AG04449 (cell line): ENCODE measurements at regions of chr9 and their contacts with region 1.

Region 1: GRCh38 chr9:70340572-70340971 is 73.9 kb downstream of the KLF9 start:
- DNase-seq: no peak
- H3K4me3 ChIP-seq: no peak overlapping the region
- CTCF ChIP-seq: peak; percentile 8

Region 2: GRCh38 chr9:70031141-70031545 is 309.4 kb before region 1 on chr9:
- CTCF ChIA-PET with region 1: no interaction called
- POLR2A ChIA-PET with region 1: no interaction called
- DNase-seq: no peak
- H3K4me3 ChIP-seq: no peak overlapping the region
- CTCF ChIP-seq: no peak

Region 3: DNA sequence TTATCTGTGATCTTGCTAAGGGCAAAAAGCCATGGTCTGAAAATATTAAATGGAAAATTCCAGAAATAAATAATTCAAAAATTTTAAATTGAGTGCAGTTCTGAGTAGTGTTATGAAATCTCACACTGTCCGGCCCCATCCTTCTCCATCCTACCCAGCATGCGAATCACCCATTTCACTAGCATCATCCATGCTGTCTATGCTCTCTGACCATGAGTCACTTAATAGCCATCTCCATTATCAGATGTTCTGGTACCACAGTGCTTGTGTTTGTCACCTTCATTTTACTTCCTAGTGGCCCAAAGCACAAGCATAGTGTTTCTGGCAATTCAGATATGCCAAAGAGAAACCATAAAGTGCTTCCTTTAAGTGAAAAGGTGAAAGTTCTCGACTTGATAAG is 145.1 kb before region 1 on chr9:
- CTCF ChIA-PET with region 1: no interaction called
- POLR2A ChIA-PET with region 1: no interaction called
- DNase-seq: no peak
- H3K4me3 ChIP-seq: no peak overlapping the region
- CTCF ChIP-seq: no peak

Region 4: DNA sequence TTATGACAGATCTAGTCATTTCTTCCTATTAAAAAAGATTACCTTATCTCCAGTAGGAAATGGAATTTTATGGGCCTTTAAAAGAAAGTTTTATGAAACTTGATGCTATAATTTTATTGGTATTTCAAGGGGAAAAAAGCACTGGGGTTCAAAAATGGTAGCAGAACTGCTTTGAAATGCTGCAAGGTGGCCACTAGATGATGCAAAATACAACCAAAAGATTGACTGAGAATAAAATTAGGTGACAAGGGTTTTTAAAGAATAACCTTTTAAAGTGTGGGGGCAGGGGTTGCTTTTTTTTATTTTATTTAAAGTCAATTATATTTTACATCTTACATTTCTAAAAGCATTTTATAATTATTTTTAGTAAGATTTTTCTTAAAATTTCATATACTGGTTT is 12.2 kb after region 1 on chr9:
- CTCF ChIA-PET with region 1: interaction called, 10 read pairs
- POLR2A ChIA-PET with region 1: no interaction called
- DNase-seq: no peak
- H3K4me3 ChIP-seq: no peak overlapping the region
- CTCF ChIP-seq: no peak

Region 5: DNA sequence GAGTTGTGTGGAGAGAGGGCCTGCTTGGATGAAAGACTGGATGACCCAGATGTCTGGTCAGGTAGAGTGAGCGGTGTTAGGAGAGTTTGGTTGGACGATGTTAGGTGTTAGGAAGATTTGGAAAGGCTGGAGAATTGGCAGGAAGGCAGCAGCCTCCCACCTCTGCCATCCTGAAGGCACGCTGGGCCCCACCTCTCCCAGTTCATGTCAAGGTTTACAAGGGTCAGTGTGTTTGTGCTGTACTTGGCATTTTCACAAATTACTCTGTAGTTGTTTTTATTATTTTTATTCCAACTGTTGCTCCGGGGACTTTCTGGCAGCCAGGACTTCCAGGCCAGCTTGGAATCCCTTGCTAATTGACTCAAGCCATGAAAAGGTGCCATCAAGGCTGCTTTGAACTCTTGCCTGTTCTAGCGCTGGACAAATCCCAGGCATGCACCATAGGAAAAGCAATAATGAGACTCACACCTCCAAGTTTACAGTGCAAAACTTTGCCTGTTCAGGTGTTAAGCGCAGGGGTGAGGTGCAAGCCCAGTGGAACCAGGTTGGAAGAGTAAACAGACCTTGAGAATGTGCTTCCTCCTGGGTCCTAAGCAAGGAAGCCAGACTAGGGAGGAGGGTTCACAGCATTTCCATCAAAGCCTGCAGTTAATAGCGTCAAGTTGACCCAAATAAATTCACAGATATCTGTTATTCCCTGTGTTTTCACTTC is 115.6 kb after region 1 on chr9:
- CTCF ChIA-PET with region 1: no interaction called
- POLR2A ChIA-PET with region 1: no interaction called
- DNase-seq: no peak
- H3K4me3 ChIP-seq: no peak overlapping the region
- CTCF ChIP-seq: no peak

Region 6: DNA sequence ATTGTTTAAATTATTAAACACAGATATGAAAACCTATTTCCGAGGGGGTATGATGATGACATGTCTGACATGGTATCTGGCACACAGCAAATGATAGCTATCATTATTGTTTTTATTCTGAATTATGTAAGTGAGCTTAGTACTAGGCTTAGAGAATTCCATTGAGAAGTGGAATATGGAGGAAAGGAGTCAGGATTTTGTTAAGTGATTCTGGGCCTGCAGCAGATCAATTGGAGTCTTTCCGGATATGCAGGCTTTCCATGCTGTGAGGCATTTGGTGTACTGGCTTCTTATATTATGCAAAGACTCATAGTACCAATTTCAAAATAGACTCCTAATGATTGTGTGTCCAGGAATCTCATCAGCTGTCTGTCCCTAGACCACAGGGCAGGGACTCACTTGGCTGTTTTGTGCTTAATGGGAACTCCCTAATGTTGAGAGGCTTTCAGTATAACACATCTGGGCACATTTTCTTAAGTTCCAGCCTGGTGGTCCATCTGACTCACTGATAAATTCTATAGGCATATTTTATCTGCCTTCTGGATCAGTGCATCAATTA is 253.9 kb after region 1 on chr9:
- CTCF ChIA-PET with region 1: interaction called, 175 read pairs
- POLR2A ChIA-PET with region 1: no interaction called
- DNase-seq: no peak
- H3K4me3 ChIP-seq: no peak overlapping the region
- CTCF ChIP-seq: no peak